ENCODE measurements at regions of chr6 and their contacts with region 1.

Region 1: DNA sequence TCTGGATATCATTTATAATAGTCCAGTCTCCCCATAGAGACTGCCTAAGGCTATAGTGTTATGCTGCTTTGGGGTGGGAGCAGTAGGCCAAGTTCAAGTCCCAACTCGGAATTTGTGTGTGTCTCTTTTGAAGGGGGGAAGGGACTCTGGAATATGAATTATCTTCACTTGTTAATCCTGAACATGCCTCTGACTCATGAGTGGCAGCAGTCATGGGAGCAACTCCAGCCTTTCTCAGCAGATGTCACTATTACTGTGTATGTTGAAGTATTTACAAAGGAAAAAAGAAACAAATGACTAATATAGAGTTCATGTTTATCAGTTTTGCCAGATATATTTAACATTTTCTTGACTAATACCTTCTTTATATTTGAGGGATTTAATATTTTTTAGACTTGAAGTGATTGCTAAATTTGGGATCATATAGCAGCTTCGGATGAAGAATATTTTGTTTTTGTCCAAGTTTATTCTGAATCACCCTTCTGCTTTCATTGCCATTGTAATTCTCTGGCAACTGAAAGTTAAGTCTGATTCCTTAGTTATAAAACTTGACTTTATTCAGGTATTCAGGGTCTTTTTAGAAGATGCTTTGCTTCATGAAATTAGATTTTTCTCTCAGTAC is 23.4 kb downstream of the FAM217A start:
- DNase-seq: peak; percentile 21
- ATAC-seq: peak; percentile 87
- H3K4me3 ChIP-seq: no peak overlapping the region
- H3K27ac ChIP-seq: no peak overlapping the region
- H3K4me1 ChIP-seq: peaks cover 0 to 21% of the 10 kb centered on the region in 2 experiments; a peak in 2 of 4 replicates
- H3K27me3 ChIP-seq: no peaks in the 10 kb centered on the region
- CTCF ChIP-seq: peak; percentile 35 to 54 (median 43); a peak in 5 of 6 replicates
- POLR2A ChIP-seq: no peak
- RAD21 ChIP-seq: peak; percentile 64

Region 2: DNA sequence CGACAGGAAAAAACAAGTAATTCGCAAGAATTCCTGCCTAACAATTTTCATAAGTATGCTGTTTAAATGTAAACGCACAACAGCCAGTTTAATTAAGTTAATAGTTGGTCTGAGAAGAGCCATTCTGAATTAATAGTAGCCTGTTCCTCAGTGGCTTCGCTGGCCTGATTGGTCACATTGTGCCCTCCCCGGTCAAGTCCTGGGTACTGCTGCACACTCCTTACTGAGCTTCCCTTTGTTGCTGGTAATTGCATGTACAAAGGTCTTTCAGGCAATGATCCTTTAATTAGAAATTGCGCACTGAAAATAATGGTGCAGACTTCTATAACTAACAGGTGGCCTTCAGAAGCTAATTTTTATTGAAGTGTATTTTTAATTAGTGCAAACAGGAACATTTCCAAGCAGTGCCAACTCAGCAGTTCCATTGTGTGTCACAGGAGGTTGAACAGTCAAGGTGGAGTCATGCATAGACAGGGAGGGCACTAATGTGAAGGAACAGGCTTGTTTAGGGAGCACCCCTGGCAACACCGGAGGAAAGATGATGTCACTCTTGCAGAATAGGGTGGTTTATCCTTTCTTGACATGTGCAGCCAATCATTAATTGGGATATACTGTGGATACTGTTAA is 506.1 kb before region 1 on chr6:
- CTCF ChIA-PET with region 1: no interaction called
- POLR2A ChIA-PET with region 1: no interaction called
- RAD21 ChIA-PET with region 1: no interaction called
- intact Hi-C with region 1: no loop called
- DNase-seq: no peak
- ATAC-seq: no peak
- H3K4me3 ChIP-seq: no peak overlapping the region
- H3K27ac ChIP-seq: no peak overlapping the region
- H3K4me1 ChIP-seq: no peaks in the 10 kb centered on the region
- H3K27me3 ChIP-seq: no peaks in the 10 kb centered on the region
- CTCF ChIP-seq: no peak
- POLR2A ChIP-seq: no peak
- RAD21 ChIP-seq: no peak

Region 3: DNA sequence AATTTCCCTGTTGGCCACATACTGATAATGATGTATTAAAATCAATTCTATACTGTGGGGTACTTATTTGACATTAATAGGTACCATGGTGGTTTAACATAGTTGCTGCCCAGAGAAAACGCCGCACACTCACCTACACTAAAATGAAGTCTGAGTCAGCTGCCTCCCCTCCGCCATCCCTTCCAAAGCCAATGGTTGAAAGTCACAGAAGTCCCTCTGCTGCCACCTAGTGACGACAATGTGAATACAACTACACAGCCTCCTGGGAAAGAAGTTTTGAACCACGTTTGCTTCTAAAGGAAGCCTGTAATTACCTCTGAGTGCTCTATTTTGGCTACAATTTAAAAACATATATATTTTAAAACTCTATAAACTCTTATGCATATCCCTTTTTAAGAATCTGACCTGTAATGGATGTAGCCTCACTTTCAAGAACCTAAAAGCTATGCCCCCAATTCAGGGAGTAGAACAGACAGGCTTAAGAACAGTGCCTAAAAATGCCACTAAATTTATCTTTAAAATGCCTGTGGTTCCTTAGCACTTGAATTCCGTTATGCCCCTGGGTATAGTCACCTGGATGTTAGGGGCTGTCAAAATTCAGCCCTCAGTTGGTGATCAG is 100.4 kb after region 1 on chr6:
- CTCF ChIA-PET with region 1: interaction called, 13 read pairs
- POLR2A ChIA-PET with region 1: no interaction called
- RAD21 ChIA-PET with region 1: no interaction called
- intact Hi-C with region 1: loop called (anchors 1 kb)
- DNase-seq: peak; percentile 70
- ATAC-seq: peak; percentile 97
- H3K4me3 ChIP-seq: no peak overlapping the region
- H3K27ac ChIP-seq: no peak overlapping the region
- H3K4me1 ChIP-seq: peaks cover 0 to 6% of the 10 kb centered on the region in 2 experiments; a peak in 1 of 4 replicates
- H3K27me3 ChIP-seq: no peaks in the 10 kb centered on the region
- CTCF ChIP-seq: peak; percentile 76 to 83 (median 78); a peak in 5 of 6 replicates
- POLR2A ChIP-seq: no peak
- RAD21 ChIP-seq: peak; percentile 94

Region 4: DNA sequence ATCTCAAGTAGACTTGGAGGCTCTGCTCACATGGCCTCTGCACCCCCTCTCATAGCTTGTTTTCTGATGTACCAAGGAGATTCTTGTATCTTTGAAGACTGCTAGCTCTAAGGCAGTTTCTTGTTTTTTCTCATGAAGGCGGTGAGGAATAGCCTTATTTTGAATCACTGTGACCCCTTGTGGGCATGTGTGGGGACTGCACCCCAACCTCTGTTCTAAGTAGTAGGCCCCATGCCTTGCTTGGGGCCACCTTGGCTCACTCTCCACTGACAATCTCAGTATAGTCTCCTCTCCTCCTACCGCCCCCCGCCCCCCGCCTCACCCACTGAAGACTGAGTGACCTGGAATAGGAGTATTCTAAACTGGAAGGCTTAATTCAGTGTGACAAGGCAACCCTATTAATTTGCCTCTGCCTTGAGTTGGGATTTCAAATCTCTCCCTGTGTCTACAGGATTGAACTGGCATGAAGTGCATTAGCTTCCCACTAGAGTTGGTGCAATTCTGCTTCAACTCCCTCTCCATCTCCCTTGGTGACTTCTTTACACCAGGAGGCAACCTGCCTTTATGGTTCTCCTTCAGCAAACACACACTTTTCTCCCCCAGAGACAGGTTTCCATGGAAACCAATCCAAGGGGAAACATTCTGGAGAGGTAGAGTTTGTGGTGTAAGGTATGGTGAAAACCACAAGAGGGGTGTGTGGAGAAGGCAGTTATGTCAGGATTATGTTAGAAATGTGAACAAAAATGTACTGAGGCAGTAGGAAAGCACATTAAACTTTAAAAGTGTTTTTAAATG is 155.3 kb after region 1 on chr6:
- CTCF ChIA-PET with region 1: interaction called, 7 read pairs
- POLR2A ChIA-PET with region 1: no interaction called
- RAD21 ChIA-PET with region 1: no interaction called
- intact Hi-C with region 1: loop called (anchors 5 kb)
- DNase-seq: peak; percentile 41
- ATAC-seq: peak; percentile 99
- H3K4me3 ChIP-seq: no peak overlapping the region
- H3K27ac ChIP-seq: no peak overlapping the region
- H3K4me1 ChIP-seq: no peaks in the 10 kb centered on the region
- H3K27me3 ChIP-seq: no peaks in the 10 kb centered on the region
- CTCF ChIP-seq: peak; percentile 50 to 82 (median 77); a peak in 5 of 6 replicates
- POLR2A ChIP-seq: no peak
- RAD21 ChIP-seq: peak; percentile 76

Measured in HCT116 (cell line).